GM13976 (cell line): ENCODE measurements at regions of chr11 and their contacts with region 1.

Region 1: DNA sequence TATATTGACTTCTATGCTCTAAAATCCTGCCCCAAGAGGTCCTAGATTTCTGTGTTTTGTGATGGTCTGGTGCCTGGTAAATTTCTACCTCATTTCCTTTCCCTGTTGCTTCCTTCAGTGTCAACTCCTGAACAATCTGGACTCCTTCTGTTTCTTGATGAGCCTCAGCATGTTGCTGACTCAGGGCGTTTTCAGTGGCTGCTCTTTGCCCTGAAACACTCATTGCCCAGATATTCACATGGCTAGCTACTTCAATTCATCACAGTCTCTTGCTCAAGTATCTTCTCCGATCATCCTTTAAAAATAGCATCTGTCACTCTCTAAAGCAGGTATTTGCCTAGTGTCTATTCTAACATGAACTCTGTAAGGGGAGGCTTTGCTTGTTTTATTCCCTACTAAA is 526.3 kb upstream of the RAG2 start:
- DNase-seq: no peak
- CTCF ChIP-seq: no peak

Region 2: DNA sequence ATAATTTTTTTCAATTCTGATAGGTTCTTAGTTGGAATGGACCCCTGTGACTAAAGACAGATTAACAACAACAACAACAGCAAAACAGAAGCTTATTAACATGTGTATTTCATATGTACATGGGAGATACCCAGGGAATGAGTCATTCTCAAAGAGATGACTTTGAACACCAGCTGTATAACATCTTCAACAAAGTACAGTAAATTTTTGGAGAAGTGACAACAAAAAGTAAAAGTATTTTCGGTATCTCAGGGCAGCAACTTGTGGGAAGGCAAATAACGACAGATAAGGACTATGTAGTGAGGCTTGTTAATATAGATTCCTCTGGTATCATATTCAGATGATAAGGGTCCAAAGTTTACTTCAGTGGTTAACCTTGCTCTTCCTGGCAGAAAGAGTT is 47.1 kb after region 1 on chr11:
- in situ Hi-C with region 1: loop called (anchors 10 kb)
- DNase-seq: no peak
- CTCF ChIP-seq: no peak